ENCODE measurements at regions of chrX and their contacts with region 1.

Region 1: GRCh38 chrX:136268051-136269048 is 17.1 kb upstream of the MAP7D3 start:
- DNase-seq: peak; percentile 48
- H3K4me3 ChIP-seq: no peak overlapping the region
- H3K27ac ChIP-seq: no peak overlapping the region
- H3K4me1 ChIP-seq: no peaks in the 10 kb centered on the region
- H3K27me3 ChIP-seq: peaks cover 5% of the 10 kb centered on the region; the same call in 1 of the 2 replicates
- CTCF ChIP-seq: peak; percentile 90
- EP300 ChIP-seq: no peak
- RAD21 ChIP-seq: peak; percentile 80

Region 2: GRCh38 chrX:136251041-136251991 is 17.0 kb before region 1 on chrX and contains the start of gene MAP7D3:
- CTCF ChIA-PET with region 1: interaction called, 18 read pairs
- POLR2A ChIA-PET with region 1: no interaction called
- DNase-seq: peak; percentile 91
- H3K4me3 ChIP-seq: peak within 1 kb of the TSS; percentile 65 to 73
- H3K27ac ChIP-seq: peak within 1 kb of the TSS in 1 of 2 experiments; percentile 38; a peak in 2 of 4 replicates
- H3K4me1 ChIP-seq: no peaks in the 10 kb centered on the region; a peak in 2 of 4 replicates
- H3K27me3 ChIP-seq: no peaks in the 10 kb centered on the region; the same call in 1 of the 2 replicates
- CTCF ChIP-seq: no peak
- EP300 ChIP-seq: no peak
- RAD21 ChIP-seq: no peak
- polyA plus RNA-seq, gene MAP7D3: 5.8 and 6.7 TPM in 2 replicates

Measured in SK-N-SH (cell line).